ENCODE measurements at regions of chr19 and their contacts with region 1.

Region 1: GRCh38 chr19:36214386-36215275 is at the starts of genes ZNF146 and ZNF565:
- DNase-seq: peak; percentile 96 to 98 (median 97)
- H3K4me3 ChIP-seq: peak within 1 kb of the TSS; percentile 76 to 98
- H3K4me3 Mint-ChIP-seq: no peak within 1 kb of the TSS
- H3K27ac ChIP-seq: peak within 1 kb of the TSS; percentile 96
- H3K27ac Mint-ChIP-seq: no peak within 1 kb of the TSS
- H3K4me1 ChIP-seq: peaks cover 35% of the 10 kb centered on the region
- H3K4me1 Mint-ChIP-seq: peaks cover 15 to 26% (median 17%) of the 10 kb centered on the region in 4 donors
- H3K27me3 ChIP-seq: no peaks in the 10 kb centered on the region
- H3K27me3 Mint-ChIP-seq: no peaks in the 10 kb centered on the region
- total RNA-seq, gene ZNF146: 74.9 to 75.7 TPM
- total RNA-seq, gene ZNF565: 8.4 to 10.9 TPM

Region 2: DNA sequence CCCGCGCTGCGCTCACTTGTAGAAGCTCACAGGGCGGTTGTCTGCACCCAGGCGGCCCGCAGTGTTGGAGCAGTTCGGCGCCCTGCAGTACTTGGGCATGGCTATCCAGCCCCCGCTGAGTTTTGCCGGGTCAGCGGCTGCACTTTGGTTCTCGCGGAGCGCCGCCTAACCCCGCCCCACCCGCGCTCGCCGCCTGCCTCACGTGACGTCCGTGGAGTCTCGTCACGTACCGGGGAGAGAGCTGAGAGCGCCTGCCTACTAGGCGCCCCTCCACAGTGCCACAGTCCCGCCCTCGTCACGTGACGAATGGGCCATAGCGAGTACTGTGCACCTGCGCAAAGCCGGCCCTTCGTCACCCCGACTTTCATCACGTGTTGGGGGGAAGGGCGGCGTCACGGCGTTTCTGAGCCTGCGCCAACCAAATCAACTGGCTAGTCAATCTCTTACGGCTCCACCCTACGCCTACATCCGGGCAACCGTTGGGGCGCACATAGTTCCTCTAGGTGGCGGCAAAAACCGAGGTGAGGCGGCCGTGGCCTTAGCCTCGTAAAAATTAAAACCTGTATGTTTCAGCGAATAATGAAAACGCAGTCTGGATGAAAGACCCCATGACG is 160.4 kb before region 1 on chr19 and contains the start of gene THAP8:
- CTCF ChIA-PET with region 1: no interaction called
- POLR2A ChIA-PET with region 1: interaction called, 10 read pairs
- intact Hi-C with region 1: loop called (anchors 1 kb)
- DNase-seq: peak; percentile 99 to 100 (median 100)
- H3K4me3 ChIP-seq: peak within 1 kb of the TSS; percentile 79 to 93
- H3K4me3 Mint-ChIP-seq: peak within 1 kb of the TSS; percentile 96 to 100 (median 99)
- H3K27ac ChIP-seq: peak within 1 kb of the TSS; percentile 78
- H3K27ac Mint-ChIP-seq: peak within 1 kb of the TSS; percentile 98 to 99 (median 98)
- H3K4me1 ChIP-seq: peaks cover 11% of the 10 kb centered on the region
- H3K4me1 Mint-ChIP-seq: peaks cover 16 to 41% (median 21%) of the 10 kb centered on the region in 4 donors
- H3K27me3 ChIP-seq: no peaks in the 10 kb centered on the region
- H3K27me3 Mint-ChIP-seq: no peaks in the 10 kb centered on the region
- total RNA-seq, gene THAP8: 5.1 to 7.0 TPM

Region 3: DNA sequence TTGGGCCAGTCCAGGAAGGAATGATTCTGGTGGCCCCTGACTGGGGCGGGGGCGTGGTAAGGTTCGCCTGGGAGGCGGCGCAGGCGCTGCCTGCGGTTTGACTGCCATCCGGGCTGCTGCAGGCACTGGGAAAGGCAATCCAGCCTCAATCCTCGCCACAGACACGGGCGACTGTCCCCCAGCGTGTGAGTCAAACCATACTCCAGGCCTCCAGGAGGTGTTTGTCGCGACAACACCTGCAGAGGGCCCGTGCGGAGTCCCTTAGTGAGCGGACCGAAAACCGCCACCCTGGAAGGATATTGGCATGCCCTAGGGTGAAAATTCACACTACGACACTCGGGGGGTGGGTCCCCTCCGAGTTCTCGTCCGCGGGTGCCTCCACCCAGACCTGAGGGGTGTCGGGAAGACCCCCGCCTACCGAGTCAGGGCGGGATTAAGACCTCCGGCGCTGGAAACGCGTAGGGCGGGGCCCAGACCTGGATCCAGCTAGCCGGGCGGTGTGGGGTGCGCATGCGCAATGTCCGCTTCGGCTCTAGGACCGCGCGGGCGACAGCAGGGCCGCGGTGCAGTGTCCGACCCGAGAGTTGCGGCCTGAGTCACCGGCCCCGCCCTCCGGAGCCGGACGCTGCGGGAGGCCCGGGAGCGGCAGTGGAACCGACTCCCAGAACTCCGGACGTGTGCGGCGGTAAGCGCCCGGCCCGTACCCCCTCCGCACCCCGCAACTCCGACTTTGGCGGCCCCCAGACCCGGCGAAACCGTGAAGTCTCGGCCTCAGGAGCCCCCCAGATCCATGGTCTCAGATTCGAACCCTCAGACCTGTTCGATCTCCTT is 74.9 kb before region 1 on chr19 and contains the start of gene CAPNS1:
- CTCF ChIA-PET with region 1: no interaction called
- POLR2A ChIA-PET with region 1: interaction called, 15 read pairs
- intact Hi-C with region 1: loop called (anchors 1 kb)
- DNase-seq: peak; percentile 87 to 90 (median 88)
- H3K4me3 ChIP-seq: peak within 1 kb of the TSS; percentile 74 to 84
- H3K4me3 Mint-ChIP-seq: peak within 1 kb of the TSS; percentile 92 to 97 (median 96)
- H3K27ac ChIP-seq: peak within 1 kb of the TSS; percentile 88
- H3K27ac Mint-ChIP-seq: peak within 1 kb of the TSS; percentile 70 to 97 (median 95)
- H3K4me1 ChIP-seq: peaks cover 15% of the 10 kb centered on the region
- H3K4me1 Mint-ChIP-seq: peaks cover 12 to 31% (median 23%) of the 10 kb centered on the region in 4 donors
- H3K27me3 ChIP-seq: no peaks in the 10 kb centered on the region
- H3K27me3 Mint-ChIP-seq: no peaks in the 10 kb centered on the region
- total RNA-seq, gene CAPNS1: 255 to 259 TPM

Region 4: DNA sequence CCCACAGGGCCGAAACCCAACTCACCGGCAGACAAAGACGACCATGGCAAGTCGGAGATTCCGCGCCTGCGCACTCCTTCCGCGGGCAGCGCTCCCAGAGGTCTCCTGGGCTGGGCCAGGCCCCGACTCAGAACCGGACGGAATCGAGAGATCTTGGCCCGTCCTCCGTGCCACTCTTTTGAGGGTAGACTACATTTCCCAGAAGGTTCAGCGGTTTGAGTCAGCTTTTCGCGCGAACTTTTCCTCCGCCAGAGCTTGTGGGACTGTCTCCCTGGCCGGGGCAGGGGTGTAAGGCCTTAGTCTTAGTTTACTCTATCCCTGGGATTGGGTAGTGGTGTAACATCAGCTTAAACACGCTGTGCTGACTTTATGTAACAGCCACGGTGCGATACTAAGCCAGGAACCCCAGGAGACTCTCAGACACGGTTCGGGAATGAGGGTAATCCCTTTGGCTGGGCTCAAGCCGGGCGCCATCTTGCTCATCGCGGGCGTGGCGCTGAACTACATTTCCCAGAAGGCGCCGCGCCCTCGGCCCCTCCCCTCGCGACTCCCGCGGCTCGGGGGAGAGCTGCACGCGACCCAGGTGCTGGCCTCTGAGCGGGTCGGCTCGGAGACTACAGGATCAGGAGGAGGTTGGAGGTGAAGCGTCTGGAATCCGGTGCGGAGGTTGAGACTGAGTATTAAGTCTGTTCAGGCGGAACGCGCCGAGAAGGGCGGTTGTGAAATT is 313.7 kb after region 1 on chr19 and contains the start of gene ZNF260:
- CTCF ChIA-PET with region 1: no interaction called
- POLR2A ChIA-PET with region 1: interaction called, 15 read pairs
- intact Hi-C with region 1: loop called (anchors 1 kb)
- DNase-seq: peak; percentile 90 to 95 (median 93)
- H3K4me3 ChIP-seq: peak within 1 kb of the TSS; percentile 88 to 99
- H3K4me3 Mint-ChIP-seq: peak within 1 kb of the TSS; percentile 91 to 100 (median 97)
- H3K27ac ChIP-seq: peak within 1 kb of the TSS; percentile 87
- H3K27ac Mint-ChIP-seq: peak within 1 kb of the TSS; percentile 91 to 99 (median 97)
- H3K4me1 ChIP-seq: peaks cover 22% of the 10 kb centered on the region
- H3K4me1 Mint-ChIP-seq: peaks cover 17 to 29% (median 22%) of the 10 kb centered on the region in 4 donors
- H3K27me3 ChIP-seq: no peaks in the 10 kb centered on the region
- H3K27me3 Mint-ChIP-seq: no peaks in the 10 kb centered on the region
- total RNA-seq, gene ZNF260: 15.4 to 18.8 TPM

Region 5: DNA sequence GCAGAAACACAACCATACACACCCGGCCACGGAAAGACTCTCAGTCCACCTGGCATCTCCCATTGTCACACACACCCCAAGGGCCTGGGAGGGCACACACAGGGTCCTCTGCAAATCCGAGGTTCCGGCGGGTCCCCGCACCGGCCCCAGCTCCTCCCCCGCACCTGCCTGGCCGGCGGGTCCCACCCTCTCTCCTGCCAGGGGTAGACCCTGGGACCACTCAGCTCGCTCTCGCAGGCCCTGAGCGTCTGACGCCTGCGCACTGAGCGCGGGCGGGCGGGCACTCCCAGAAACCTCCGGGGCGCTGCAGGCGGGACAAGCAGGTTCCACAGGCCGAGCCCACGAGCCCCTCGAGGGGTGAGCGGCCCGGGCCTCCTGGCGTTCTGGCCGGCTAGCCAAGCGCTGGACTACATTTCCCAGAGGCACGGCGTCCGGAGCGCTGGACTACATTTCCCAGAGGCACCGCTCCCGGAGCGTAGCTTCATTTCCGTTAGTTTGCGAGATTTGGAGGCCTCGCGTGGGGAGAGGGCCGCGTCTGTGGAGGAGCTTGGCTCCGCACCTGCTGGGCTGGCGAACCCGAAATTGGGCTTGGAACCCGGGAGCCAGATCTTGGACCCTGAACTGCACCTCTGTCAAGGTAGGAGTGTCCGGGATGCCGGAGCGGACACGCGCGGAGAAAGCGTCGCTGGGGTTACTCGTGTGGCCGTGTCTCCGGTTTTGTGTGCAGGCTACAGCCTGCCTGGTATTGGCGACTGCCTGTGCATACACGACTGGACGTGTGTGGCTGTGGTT is 863.5 kb after region 1 on chr19 and contains the start of gene ZNF420:
- CTCF ChIA-PET with region 1: no interaction called
- POLR2A ChIA-PET with region 1: interaction called, 5 read pairs
- intact Hi-C with region 1: loop called (anchors 1 kb)
- DNase-seq: peak; percentile 85 to 92 (median 87)
- H3K4me3 ChIP-seq: peak within 1 kb of the TSS; percentile 61 to 88
- H3K4me3 Mint-ChIP-seq: peak within 1 kb of the TSS; percentile 90 to 100 (median 98)
- H3K27ac ChIP-seq: peak within 1 kb of the TSS; percentile 73
- H3K27ac Mint-ChIP-seq: peak within 1 kb of the TSS; percentile 85 to 99 (median 95)
- H3K4me1 ChIP-seq: peaks cover 23% of the 10 kb centered on the region
- H3K4me1 Mint-ChIP-seq: peaks cover 22 to 43% (median 27%) of the 10 kb centered on the region in 4 donors
- H3K27me3 ChIP-seq: no peaks in the 10 kb centered on the region
- H3K27me3 Mint-ChIP-seq: no peaks in the 10 kb centered on the region
- total RNA-seq, gene ZNF420: 25.0 to 28.6 TPM

Region 6: DNA sequence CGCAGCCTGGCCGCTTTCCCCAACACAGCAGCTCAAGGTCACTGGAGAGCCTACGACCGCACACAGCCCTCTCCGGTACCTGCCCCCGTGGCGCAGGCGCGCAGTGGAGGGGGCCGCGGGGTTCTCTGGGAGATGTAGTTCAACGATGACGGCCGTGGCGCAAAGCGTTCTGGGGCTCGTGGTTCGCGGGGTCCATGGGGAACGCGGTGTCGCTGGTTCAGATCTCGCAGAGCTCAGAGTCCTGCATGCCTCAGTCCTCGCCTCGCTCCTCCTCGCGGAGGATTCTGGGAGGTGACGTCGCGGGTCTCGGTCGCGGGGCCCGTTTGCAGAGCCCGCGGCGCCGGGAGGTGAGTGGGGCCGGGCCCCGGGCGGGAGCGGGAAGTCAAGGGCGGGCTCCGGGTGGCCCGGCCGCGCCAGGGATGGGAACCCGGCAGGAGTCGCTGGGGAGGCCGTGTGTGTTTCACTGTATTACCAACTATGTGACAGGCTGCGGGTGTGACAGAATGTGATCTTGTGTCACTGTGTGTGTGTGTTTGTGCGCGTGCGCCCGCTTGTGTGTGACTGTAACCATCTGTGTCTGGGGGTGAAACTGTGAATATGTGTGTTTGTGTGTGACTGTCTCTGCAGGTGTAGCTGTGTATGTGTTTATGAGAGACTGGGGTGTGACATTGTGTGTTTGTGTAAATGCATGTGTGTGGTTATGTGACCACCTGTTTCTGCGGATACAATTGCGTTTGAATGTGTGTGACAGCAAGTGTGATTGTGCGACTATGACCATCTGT is 1156.4 kb after region 1 on chr19 and contains the start of gene ZNF527:
- CTCF ChIA-PET with region 1: no interaction called
- POLR2A ChIA-PET with region 1: interaction called, 7 read pairs
- intact Hi-C with region 1: loop called (anchors 2 kb)
- DNase-seq: peak; percentile 96 to 98 (median 97)
- H3K4me3 ChIP-seq: peak within 1 kb of the TSS; percentile 63 to 86
- H3K4me3 Mint-ChIP-seq: peak within 1 kb of the TSS; percentile 97 to 100 (median 98)
- H3K27ac ChIP-seq: peak within 1 kb of the TSS; percentile 78
- H3K27ac Mint-ChIP-seq: peak within 1 kb of the TSS; percentile 97 to 99 (median 98)
- H3K4me1 ChIP-seq: peaks cover 7% of the 10 kb centered on the region
- H3K4me1 Mint-ChIP-seq: peaks cover 9 to 28% (median 16%) of the 10 kb centered on the region in 4 donors
- H3K27me3 ChIP-seq: no peaks in the 10 kb centered on the region
- H3K27me3 Mint-ChIP-seq: no peaks in the 10 kb centered on the region
- total RNA-seq, gene ZNF527: 12.7 to 13.3 TPM

Region 7: DNA sequence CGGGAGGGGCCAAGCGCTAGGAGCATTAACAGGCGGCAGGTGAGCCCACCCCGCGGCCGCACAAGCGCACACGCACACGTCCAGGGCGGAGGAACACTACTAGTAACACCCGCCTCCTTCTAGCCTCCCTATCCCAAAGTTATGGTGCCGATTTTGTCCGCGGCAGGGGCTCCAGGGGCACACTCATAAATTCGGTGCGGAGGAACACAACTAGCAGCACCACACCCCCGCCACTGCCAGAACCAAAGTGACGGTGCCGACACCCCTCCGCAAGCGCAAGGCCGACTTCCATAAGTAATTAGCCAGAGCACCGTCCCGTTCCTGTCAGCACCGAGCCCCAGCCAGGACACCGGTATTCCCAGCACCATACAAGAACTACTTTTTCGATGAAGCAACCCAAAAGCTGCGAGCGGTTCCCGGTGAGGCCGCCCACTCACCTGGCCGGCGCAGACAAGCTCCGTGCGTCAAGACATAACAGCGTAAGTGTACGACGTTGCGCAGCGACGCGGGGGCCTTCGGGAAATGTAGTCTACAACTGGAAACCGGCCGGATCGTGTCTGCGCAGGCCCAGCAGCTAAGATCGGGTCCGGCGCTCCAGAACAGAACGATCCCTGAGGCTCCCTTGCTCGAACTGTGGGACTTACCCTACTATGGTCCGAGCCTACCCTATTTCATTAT is 1379.8 kb after region 1 on chr19 and contains the starts of genes ZNF540 and ZNF571:
- CTCF ChIA-PET with region 1: no interaction called
- POLR2A ChIA-PET with region 1: interaction called, 8 read pairs
- intact Hi-C with region 1: loop called (anchors 10 kb)
- DNase-seq: peak; percentile 88 to 96 (median 92)
- H3K4me3 ChIP-seq: peak within 1 kb of the TSS; percentile 91 to 92
- H3K4me3 Mint-ChIP-seq: peak within 1 kb of the TSS; percentile 94 to 99 (median 97)
- H3K27ac ChIP-seq: peak within 1 kb of the TSS; percentile 98
- H3K27ac Mint-ChIP-seq: peak within 1 kb of the TSS; percentile 97 to 99 (median 99)
- H3K4me1 ChIP-seq: peaks cover 24% of the 10 kb centered on the region
- H3K4me1 Mint-ChIP-seq: peaks cover 21 to 47% (median 30%) of the 10 kb centered on the region in 4 donors
- H3K27me3 ChIP-seq: no peaks in the 10 kb centered on the region
- H3K27me3 Mint-ChIP-seq: no peaks in the 10 kb centered on the region
- total RNA-seq, gene ZNF540: 24.2 to 24.5 TPM
- total RNA-seq, gene ZNF571: 10.1 to 14.2 TPM

Measured in CD4-positive, alpha-beta memory T cell (primary cell).